Naive thymus-derived CD4-positive, alpha-beta T cell (primary cell): ENCODE measurements at regions of chr19 and their contacts with region 1.

Region 1: DNA sequence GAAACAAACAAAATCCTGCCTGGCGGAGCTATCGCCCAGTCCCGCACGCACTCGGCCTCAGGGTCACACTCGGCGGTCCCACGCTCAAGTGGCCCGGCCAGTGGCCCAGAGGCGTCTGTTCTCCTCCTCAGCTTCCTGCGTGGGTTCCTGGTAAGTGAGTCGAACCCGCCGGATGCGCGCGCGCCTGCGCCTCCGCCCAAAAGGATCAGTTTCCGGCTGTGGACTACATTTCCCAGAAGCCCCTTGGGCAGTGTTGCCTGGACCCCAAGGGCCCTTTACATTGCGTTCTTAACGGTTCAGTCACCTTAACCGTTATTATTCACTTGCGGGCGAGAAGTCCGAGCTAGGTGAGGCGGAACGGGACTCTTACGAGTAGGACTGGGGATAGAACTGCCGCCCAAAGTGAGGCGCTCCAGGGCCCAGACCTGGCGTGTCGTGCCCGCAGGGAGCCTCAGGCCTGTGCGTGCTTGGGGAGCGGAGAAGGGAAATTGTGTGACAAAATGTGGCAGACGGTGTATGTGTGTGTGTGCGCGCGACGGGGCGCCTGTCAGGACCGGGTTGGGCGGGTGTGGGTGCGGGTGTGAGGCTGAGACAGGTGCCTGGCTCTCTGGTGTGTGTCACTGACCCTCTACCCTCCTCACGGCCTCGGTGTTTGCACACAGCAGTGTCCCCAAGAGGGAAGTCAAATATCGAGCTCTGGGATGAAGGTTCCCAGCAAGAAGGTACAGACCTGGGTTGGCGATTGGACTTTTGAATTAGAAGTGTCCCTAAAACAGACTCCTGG is at the start of gene ZNF546:
- DNase-seq: peak; percentile 67 to 91 (median 90)
- ATAC-seq: peak; percentile 96
- H3K4me3 ChIP-seq: peak within 1 kb of the TSS; percentile 91
- H3K4me3 Mint-ChIP-seq: peak within 1 kb of the TSS; percentile 87 to 100 (median 95)
- H3K27ac ChIP-seq: peak within 1 kb of the TSS; percentile 85
- H3K27ac Mint-ChIP-seq: peak within 1 kb of the TSS; percentile 84 to 100 (median 95)
- H3K4me1 ChIP-seq: peaks cover 10 to 13% of the 10 kb centered on the region in 2 donors
- H3K4me1 Mint-ChIP-seq: peaks cover 20 to 56% (median 41%) of the 10 kb centered on the region in 7 donors
- H3K27me3 ChIP-seq: no peaks in the 10 kb centered on the region
- H3K27me3 Mint-ChIP-seq: no peaks in the 10 kb centered on the region
- total RNA-seq, gene ZNF546: 4.7 to 24.8 (median 7.5) TPM

Region 2: GRCh38 chr19:39824143-39825092 is 172.6 kb before region 1 on chr19:
- CTCF ChIA-PET with region 1: no interaction called
- POLR2A ChIA-PET with region 1: no interaction called
- intact Hi-C with region 1: loop called (anchors 2 kb)
- DNase-seq: peak; percentile 55 to 92 (median 86)
- ATAC-seq: peak; percentile 98
- H3K4me3 ChIP-seq: peak overlapping the region; percentile 85
- H3K4me3 Mint-ChIP-seq: no peak overlapping the region
- H3K27ac ChIP-seq: peak overlapping the region; percentile 72
- H3K27ac Mint-ChIP-seq: no peak overlapping the region
- H3K4me1 ChIP-seq: peaks cover 14 to 19% of the 10 kb centered on the region in 2 donors
- H3K4me1 Mint-ChIP-seq: peaks cover 0 to 19% (median 10%) of the 10 kb centered on the region in 7 donors
- H3K27me3 ChIP-seq: no peaks in the 10 kb centered on the region
- H3K27me3 Mint-ChIP-seq: no peaks in the 10 kb centered on the region

Region 3: GRCh38 chr19:39833464-39834286 is 163.3 kb before region 1 on chr19 and contains the start of gene DYRK1B:
- CTCF ChIA-PET with region 1: no interaction called
- POLR2A ChIA-PET with region 1: interaction called, 7 read pairs
- intact Hi-C with region 1: loop called in 1 of 2 experiments (anchors 1 kb)
- DNase-seq: peak; percentile 90 to 99 (median 98)
- ATAC-seq: peak; percentile 92
- H3K4me3 ChIP-seq: peak within 1 kb of the TSS; percentile 100
- H3K4me3 Mint-ChIP-seq: peak within 1 kb of the TSS; percentile 60 to 88 (median 81)
- H3K27ac ChIP-seq: peak within 1 kb of the TSS; percentile 96
- H3K27ac Mint-ChIP-seq: peak within 1 kb of the TSS; percentile 85 to 96 (median 92)
- H3K4me1 ChIP-seq: peaks cover 17 to 23% of the 10 kb centered on the region in 2 donors
- H3K4me1 Mint-ChIP-seq: peaks cover 19 to 37% (median 27%) of the 10 kb centered on the region in 7 donors
- H3K27me3 ChIP-seq: no peaks in the 10 kb centered on the region
- H3K27me3 Mint-ChIP-seq: no peaks in the 10 kb centered on the region
- total RNA-seq, gene DYRK1B: 12.3 to 38.9 (median 23.5) TPM

Region 4: DNA sequence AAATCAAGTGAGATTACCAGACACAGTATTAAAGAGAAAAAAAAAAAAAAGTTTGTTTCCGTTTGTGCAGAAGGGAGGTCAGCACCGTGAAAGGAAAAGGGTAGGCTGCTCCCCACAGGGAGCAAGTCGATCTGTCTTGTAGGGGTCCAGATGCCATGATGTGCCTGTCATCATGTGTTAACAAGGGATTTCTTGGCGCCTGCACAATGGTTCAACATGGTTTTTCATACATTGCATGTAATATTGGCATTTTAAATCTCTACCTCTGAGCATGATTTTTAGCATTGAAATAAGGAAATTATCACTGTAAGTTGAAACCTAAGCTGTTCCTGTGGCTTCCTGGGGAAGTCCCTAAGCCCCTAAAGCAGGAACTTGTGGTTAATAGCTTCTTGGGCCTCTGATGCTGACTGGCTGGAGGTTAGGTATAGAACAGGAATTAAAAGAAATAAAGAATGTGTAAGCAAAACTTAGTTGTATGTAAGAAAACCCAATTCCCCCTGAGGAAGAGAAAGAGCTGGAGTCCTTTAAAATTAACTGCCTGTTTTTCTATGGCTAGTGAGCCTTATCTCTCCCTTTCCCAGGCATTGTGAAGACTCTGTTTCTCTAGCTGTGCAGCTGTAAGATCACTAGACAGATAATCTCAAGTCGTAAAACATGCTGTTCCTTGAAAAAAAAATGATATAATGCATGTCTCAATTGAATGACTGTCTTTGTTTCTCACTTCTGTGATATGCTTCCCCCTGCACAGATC is 55.2 kb before region 1 on chr19:
- CTCF ChIA-PET with region 1: no interaction called
- POLR2A ChIA-PET with region 1: no interaction called
- intact Hi-C with region 1: loop called in 1 of 2 experiments (anchors 1 kb)
- DNase-seq: peak in 8 of 9 donors; percentile 33 to 85 (median 78)
- ATAC-seq: peak; percentile 91
- H3K4me3 ChIP-seq: peak overlapping the region; percentile 49
- H3K4me3 Mint-ChIP-seq: peak overlapping the region; percentile 74 to 85 (median 78)
- H3K27ac ChIP-seq: peak overlapping the region; percentile 77
- H3K27ac Mint-ChIP-seq: peak overlapping the region; percentile 72 to 93 (median 87)
- H3K4me1 ChIP-seq: peaks cover 56 to 62% of the 10 kb centered on the region in 2 donors
- H3K4me1 Mint-ChIP-seq: peaks cover 62 to 95% (median 77%) of the 10 kb centered on the region in 7 donors
- H3K27me3 ChIP-seq: no peaks in the 10 kb centered on the region
- H3K27me3 Mint-ChIP-seq: no peaks in the 10 kb centered on the region

Region 5: GRCh38 chr19:40055832-40056504 is 59.0 kb after region 1 on chr19 and contains the start of gene ZNF780B:
- CTCF ChIA-PET with region 1: no interaction called
- POLR2A ChIA-PET with region 1: interaction called, 13 read pairs
- intact Hi-C with region 1: loop called (anchors 1 kb)
- DNase-seq: peak; percentile 33 to 79 (median 76)
- ATAC-seq: peak; percentile 94
- H3K4me3 ChIP-seq: peak within 1 kb of the TSS; percentile 81
- H3K4me3 Mint-ChIP-seq: peak within 1 kb of the TSS; percentile 97 to 100 (median 99)
- H3K27ac ChIP-seq: peak within 1 kb of the TSS; percentile 89
- H3K27ac Mint-ChIP-seq: peak within 1 kb of the TSS; percentile 89 to 99 (median 96)
- H3K4me1 ChIP-seq: peaks cover 12% of the 10 kb centered on the region in 2 donors
- H3K4me1 Mint-ChIP-seq: peaks cover 31 to 62% (median 54%) of the 10 kb centered on the region in 7 donors
- H3K27me3 ChIP-seq: no peaks in the 10 kb centered on the region
- H3K27me3 Mint-ChIP-seq: peaks cover 0 to 14% (median 6%) of the 10 kb centered on the region in 5 donors
- total RNA-seq, gene ZNF780B: 22.7 to 85.2 (median 35.2) TPM

Region 6: DNA sequence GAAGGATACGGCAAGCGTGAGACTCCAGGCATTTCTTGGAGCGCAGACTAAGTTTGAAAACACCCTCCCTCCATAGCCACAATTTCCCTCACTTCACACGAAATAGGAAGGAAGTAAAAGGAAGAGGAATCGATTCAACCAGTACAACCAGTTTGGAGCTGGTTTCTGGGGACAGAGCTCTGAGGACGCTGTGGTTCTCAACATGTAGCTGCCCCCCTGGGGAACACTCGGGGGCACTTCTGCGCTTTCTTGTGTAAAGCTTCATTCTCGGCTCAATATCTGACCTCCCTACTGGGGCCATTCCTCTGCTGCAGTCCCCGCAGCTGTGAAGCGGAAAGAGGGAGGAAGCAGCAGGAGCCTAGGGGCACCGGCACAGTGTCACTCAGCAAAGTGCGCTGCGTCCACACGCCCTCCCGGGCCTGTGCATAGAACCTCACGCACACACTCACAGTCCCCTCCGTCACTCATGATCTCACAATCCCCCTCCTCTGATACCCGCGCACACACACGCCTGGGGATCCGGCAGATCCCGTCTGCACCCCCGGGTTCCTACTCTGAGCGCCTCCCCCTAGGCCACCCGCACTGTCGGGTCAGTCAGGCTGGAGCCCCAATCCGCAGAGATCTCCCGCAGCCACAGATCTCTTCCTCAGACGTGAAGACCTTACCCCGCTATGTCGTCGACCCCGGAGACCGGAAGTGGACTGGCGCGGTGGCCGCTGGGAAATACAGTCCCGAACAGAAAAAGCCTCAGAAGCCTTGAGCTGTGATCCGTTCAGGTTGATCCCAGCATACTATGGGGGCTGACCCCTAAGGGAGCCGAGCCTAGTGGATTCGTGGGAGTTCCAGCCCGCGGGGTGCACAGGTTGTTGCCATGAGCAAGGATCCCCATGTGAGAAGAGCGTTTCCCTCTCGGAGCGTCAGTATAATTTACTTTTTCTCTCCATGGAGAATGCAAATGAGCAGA is 93.5 kb after region 1 on chr19 and contains the start of gene ZNF780A:
- CTCF ChIA-PET with region 1: no interaction called
- POLR2A ChIA-PET with region 1: interaction called, 16 read pairs
- intact Hi-C with region 1: loop called (anchors 1 to 2 kb)
- DNase-seq: peak; percentile 59 to 83 (median 81)
- ATAC-seq: peak; percentile 94
- H3K4me3 ChIP-seq: peak within 1 kb of the TSS; percentile 94
- H3K4me3 Mint-ChIP-seq: peak within 1 kb of the TSS; percentile 93 to 100 (median 100)
- H3K27ac ChIP-seq: peak within 1 kb of the TSS; percentile 95
- H3K27ac Mint-ChIP-seq: peak within 1 kb of the TSS; percentile 99 to 100 (median 100)
- H3K4me1 ChIP-seq: peaks cover 16 to 18% of the 10 kb centered on the region in 2 donors
- H3K4me1 Mint-ChIP-seq: peaks cover 33 to 49% (median 44%) of the 10 kb centered on the region in 7 donors
- H3K27me3 ChIP-seq: no peaks in the 10 kb centered on the region
- H3K27me3 Mint-ChIP-seq: peaks cover 8 to 11% (median 9%) of the 10 kb centered on the region in 5 donors
- total RNA-seq, gene ZNF780A: 13.9 to 49.5 (median 22.1) TPM

Region 7: DNA sequence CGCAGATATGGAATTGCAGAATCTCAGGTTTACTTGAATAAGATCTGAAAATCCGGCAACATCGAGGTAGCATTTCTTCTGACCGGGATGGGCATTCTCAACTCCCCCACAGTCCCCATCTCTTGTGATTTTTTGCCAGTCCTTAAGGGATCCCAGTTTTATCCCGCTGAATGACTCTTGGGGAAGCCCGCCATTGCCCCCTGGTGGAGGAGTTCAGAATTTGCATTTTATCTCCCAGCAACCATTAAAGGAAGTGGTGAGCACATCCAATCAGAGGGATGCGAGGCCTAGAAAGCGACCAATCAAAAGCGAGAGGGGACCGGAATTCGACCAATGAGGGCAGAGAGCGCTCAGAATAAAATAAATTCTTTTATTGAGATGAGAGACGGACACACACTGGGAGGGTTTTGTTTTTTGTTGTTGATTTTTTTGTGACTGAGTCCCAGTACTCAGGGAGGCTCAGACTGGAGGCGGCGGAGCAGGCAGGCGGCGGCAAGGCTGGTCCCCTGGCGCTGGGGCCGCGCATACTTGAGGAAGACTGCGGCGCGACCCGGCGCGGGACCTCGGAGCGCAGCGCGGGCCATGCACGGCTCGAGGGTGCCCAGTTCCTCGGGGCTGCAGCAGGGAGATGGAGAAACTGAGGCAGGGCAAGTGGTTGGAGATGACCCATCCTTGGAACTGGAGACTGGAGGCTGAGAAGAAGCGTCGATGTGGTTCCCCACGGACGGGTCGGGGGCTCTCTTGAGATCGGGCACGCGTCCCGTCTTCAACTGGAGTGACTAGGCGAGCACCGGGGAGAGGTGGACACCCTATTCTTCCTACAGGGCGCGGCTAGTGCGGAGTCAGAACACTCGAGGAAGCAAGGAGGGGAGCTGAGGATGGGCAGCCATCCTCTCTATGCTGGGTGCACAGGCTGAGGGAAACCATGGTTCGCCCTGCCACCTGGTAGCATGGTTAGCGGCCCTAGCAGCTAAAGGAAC is 225.1 kb after region 1 on chr19:
- CTCF ChIA-PET with region 1: no interaction called
- POLR2A ChIA-PET with region 1: no interaction called
- intact Hi-C with region 1: loop called in 1 of 2 experiments (anchors 1 kb)
- DNase-seq: peak; percentile 54 to 86 (median 82)
- ATAC-seq: peak; percentile 92
- H3K4me3 ChIP-seq: no peak overlapping the region
- H3K4me3 Mint-ChIP-seq: peak overlapping the region; percentile 16 to 85 (median 68)
- H3K27ac ChIP-seq: no peak overlapping the region
- H3K27ac Mint-ChIP-seq: peak overlapping the region; percentile 5 to 85 (median 58)
- H3K4me1 ChIP-seq: peaks cover 4 to 20% of the 10 kb centered on the region in 2 donors
- H3K4me1 Mint-ChIP-seq: peaks cover 12 to 30% (median 24%) of the 10 kb centered on the region in 7 donors
- H3K27me3 ChIP-seq: peaks cover 16 to 35% of the 10 kb centered on the region in 2 donors
- H3K27me3 Mint-ChIP-seq: peaks cover 49 to 70% (median 60%) of the 10 kb centered on the region in 5 donors